HEK293T (cell line): ENCODE measurements at regions of chr7 and their contacts with region 1.

Region 1: GRCh38 chr7:150368096-150368883 is at the start of gene REPIN1:
- DNase-seq: peak; percentile 86

Region 2: DNA sequence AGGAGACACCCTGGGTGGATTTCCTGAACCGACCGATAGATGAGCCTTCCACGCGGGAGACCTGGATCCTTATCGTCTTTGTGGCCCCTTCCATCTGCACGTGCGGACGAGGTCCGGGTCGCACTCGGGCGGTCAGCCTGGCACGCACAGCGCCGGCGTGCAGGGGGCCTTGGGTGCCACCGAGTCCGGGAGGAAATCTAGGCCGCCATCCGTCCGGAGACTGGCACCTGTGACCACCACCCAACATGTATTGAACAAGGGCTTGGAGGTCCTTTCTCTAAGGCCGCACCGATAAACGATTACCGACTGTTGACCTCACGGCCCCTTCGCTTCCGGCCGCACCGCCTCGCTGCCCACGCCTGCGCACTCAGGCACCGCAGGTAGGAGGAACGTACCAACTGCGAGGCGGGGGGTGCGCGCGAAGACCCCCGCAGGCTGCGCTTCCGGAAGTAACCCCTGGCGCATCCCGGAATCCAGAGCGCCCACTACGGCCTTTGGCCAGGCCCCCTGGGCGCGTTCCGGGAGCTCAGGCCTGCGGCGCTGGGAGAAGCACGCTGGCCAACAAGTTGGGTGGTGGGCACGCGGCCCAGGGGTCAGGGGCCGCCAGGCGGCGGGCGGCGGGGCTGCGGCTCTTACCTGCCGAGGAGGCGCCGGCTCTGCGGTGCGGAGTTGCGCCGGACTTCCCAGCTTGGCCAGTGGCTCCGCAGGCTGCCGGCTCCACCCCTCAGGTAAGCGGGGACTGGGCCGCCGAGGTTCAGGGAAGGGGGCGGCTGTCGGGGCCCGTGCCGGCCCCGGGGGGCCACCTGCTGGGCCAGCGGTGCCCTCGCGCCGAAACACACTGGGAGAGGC is 45.2 kb before region 1 on chr7 and contains the starts of genes ACTR3C and LRRC61:
- CTCF ChIA-PET with region 1: no interaction called
- POLR2A ChIA-PET with region 1: interaction called, 21 read pairs
- DNase-seq: peak; percentile 79

Region 3: GRCh38 chr7:150356265-150356897 is 11.9 kb before region 1 on chr7:
- CTCF ChIA-PET with region 1: interaction called, 9 read pairs
- POLR2A ChIA-PET with region 1: interaction called, 22 read pairs
- DNase-seq: peak; percentile 65

Region 4: DNA sequence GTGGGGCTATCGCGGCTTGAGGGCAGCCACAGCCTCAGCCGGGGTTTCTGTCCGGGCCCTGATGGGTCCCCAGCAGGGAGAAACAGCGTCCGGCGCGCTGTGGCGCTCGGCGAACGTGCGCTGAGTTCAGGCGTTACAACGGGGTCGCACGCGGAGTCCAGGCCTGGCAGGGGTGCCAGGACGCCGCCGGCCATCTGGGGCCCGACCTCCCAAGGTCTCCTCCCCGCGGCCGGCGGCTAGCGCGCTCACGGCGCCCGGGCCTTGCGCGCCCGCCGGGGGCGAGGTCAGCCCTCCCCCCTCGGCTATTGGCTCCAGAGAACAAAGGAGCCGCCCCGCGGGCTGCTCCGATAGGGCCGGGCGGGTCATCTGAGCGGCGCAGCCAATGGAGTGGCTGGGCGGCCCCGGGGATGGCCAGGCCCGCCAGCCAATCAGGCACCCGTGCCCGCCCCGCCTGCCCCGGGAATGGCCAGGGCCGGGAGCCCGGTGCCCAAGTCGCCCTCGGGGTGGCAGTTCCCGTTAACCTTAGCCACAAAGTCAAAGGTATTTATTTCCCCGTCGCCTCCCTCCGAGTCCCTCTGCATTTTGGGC is 10.7 kb after region 1 on chr7 and contains the start of gene ZNF775:
- CTCF ChIA-PET with region 1: interaction called, 3 read pairs
- POLR2A ChIA-PET with region 1: interaction called, 50 read pairs
- DNase-seq: peak; percentile 100

Region 5: DNA sequence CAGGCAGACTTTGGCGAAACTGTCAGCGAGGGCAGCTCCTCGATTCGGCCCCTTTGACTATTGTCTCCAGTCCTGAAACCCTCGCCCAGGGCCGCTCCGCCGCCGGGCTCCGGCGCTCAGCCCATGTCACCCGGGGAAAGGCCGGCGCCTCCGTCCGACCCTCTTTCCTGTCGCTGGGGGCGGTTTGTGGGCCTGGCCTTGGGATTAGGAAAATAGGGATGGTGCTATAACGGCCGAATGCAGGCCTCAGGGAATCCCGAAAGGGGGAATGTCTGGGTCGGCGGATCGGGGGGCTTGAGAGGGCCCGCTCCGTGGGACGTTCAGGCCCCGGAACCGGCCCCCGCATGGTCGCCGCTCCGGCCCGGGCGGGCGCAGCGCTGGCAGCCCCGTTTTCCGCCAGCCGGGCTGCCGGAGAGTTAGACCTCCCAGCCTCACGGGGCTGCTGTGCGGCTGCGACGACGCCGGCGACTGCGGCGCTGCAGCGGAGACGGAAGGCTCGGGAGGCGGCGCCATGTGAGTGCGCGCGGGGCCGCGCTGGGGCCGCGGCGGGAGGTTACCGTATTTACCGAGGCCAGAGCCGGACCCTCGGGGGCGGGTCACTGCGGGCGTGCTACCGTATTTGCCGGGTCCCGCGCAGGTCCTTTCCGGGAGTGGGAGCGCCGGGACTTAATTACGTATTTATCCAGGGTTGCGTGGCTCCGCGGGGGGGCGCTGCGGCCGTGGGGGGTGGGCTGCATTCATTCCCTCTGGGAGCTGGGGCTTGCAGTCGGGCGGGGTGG is 36.7 kb after region 1 on chr7:
- CTCF ChIA-PET with region 1: interaction called, 3 read pairs
- POLR2A ChIA-PET with region 1: interaction called, 20 read pairs
- DNase-seq: peak; percentile 97

Region 6: DNA sequence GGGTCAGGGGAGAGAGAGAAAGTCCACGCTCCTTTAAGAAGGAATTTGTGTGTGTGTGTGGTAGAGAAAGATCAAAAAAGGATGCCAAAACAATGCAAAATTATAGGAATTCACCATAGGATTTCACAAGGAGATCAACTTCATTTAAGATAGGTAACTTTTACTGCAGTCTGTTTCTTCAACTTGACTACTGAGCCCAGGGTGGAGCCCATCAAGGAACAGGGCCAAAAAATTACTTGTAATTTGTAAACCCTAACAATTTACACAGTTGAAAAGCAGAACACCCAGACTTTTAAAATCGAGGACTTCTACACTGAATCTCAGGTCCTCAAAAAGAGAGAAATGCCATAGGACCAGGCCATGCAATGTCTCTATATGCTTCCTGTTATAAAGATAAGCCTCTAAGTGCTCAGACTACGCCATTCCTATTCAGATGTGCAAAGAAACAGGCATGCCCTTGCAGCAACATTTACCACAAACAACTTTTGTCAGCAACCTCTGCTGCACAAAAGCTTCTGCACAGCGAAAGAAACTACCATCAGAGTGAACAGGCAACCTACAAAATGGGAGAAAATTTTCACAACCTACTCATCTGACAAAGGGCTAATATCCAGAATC is 188.3 kb after region 1 on chr7:
- CTCF ChIA-PET with region 1: no interaction called
- POLR2A ChIA-PET with region 1: no interaction called
- DNase-seq: no peak